ENCODE measurements at regions of chr15 and their contacts with region 1.

Region 1: DNA sequence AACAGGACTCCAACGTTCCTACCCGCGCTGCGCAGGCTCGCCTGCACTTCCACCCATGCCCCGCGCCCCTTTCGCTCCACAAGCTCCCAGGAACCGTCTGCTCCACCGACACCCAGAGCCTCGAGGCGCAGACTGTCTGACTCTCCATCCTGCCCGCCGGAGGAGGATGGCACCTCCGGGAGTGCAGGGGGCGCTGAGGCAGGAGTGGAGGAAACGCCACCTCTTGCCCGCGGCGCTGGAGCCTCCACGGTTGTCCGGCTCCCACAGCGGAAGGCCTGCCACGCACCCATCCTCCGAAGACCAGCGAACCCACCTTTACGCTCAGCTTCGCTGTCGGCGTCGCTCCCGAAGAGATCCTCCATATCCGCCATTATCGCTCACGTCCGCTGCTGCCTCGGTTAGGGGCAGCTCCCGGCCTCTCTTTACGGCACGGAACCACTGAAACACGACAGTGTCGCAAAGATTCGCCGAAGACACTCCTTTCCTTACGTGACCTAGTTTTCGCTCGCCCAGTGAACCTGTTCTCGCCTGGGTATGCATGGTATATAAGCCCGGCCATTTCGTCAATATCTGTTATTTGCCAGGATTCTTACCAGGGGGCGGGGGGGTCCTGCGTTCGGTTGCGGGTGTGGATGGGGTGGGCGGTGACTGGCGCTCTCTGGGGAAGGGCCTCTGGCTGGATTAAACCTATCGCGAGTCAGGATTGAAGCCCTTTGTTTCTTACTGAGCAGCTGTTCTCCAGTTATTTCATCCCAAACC is at the start of gene LEO1:
- DNase-seq: peak; percentile 92 to 95 (median 93)
- H3K4me3 ChIP-seq: peak within 1 kb of the TSS; percentile 93 to 96
- H3K4me3 Mint-ChIP-seq: peak within 1 kb of the TSS; percentile 95 to 100 (median 98)
- H3K27ac ChIP-seq: peak within 1 kb of the TSS; percentile 77
- H3K27ac Mint-ChIP-seq: peak within 1 kb of the TSS; percentile 94 to 99 (median 97)
- H3K4me1 ChIP-seq: peaks cover 18% of the 10 kb centered on the region
- H3K4me1 Mint-ChIP-seq: peaks cover 15 to 23% (median 19%) of the 10 kb centered on the region in 4 donors
- H3K27me3 ChIP-seq: no peaks in the 10 kb centered on the region
- H3K27me3 Mint-ChIP-seq: peaks cover 0 to 1% of the 10 kb centered on the region in 2 donors
- total RNA-seq, gene LEO1: 21.7 to 22.2 TPM

Region 2: GRCh38 chr15:52018693-52019387 is 47.3 kb after region 1 on chr15 and contains the start of gene MAPK6:
- CTCF ChIA-PET with region 1: interaction called, 7 read pairs
- POLR2A ChIA-PET with region 1: interaction called, 35 read pairs
- intact Hi-C with region 1: loop called (anchors 1 kb)
- DNase-seq: peak; percentile 91 to 94 (median 94)
- H3K4me3 ChIP-seq: peak within 1 kb of the TSS; percentile 59 to 78
- H3K4me3 Mint-ChIP-seq: peak within 1 kb of the TSS; percentile 94 to 99 (median 97)
- H3K27ac ChIP-seq: peak within 1 kb of the TSS; percentile 89
- H3K27ac Mint-ChIP-seq: peak within 1 kb of the TSS; percentile 98 to 99 (median 98)
- H3K4me1 ChIP-seq: peaks cover 41% of the 10 kb centered on the region
- H3K4me1 Mint-ChIP-seq: peaks cover 25 to 54% (median 38%) of the 10 kb centered on the region in 4 donors
- H3K27me3 ChIP-seq: no peaks in the 10 kb centered on the region
- H3K27me3 Mint-ChIP-seq: no peaks in the 10 kb centered on the region
- total RNA-seq, gene MAPK6: 18.2 to 24.0 TPM

Region 3: DNA sequence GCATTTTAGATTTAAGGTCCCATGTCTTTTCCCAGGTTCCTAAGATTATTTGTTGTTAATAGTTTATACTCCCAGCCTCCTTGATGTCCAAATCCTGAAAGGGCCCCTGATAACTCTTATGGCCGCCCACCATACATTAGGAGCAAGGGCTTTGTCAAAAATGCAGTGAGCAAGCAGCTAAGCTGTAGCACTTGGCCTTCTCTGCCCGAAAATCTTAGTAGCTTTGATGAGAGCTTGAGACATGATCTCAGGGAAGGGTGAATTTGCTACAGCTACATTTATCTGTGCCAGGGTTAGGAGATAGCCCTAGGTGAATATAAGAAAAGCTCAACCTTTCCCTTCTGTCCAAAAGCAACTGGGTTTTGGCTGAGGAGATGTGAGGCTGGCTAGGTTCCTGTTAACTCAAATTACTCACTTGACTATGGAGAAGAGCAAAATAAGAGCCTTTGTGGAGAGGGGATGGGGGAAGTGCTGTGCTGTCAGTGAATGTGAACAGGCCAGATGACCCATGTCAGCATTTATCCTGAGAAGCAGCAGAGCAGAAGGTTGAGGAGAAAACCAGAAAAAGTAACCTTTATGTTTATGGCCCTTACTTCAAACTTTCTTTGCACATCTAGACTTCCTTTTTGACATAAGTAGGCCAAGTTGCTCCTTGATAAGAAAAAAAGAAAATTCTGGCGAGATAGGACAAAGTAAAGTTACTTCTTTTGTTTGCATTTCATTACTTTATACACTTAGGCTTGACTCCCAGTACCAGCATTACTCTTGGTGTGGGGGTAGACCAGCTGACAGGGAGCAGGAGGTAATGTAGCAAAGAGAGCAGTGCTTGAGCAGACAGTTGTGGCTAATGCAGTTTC is 68.6 kb after region 1 on chr15:
- CTCF ChIA-PET with region 1: no interaction called
- POLR2A ChIA-PET with region 1: interaction called, 6 read pairs
- intact Hi-C with region 1: loop called (anchors 1 kb)
- DNase-seq: no peak
- H3K4me3 ChIP-seq: no peak overlapping the region
- H3K4me3 Mint-ChIP-seq: peak overlapping the region in 3 of 8 donors; percentile 5 to 33 (median 9)
- H3K27ac ChIP-seq: no peak overlapping the region
- H3K27ac Mint-ChIP-seq: peak overlapping the region; percentile 13 to 86 (median 77)
- H3K4me1 ChIP-seq: peaks cover 48% of the 10 kb centered on the region
- H3K4me1 Mint-ChIP-seq: peaks cover 44 to 67% (median 55%) of the 10 kb centered on the region in 4 donors
- H3K27me3 ChIP-seq: no peaks in the 10 kb centered on the region
- H3K27me3 Mint-ChIP-seq: no peaks in the 10 kb centered on the region

Region 4: DNA sequence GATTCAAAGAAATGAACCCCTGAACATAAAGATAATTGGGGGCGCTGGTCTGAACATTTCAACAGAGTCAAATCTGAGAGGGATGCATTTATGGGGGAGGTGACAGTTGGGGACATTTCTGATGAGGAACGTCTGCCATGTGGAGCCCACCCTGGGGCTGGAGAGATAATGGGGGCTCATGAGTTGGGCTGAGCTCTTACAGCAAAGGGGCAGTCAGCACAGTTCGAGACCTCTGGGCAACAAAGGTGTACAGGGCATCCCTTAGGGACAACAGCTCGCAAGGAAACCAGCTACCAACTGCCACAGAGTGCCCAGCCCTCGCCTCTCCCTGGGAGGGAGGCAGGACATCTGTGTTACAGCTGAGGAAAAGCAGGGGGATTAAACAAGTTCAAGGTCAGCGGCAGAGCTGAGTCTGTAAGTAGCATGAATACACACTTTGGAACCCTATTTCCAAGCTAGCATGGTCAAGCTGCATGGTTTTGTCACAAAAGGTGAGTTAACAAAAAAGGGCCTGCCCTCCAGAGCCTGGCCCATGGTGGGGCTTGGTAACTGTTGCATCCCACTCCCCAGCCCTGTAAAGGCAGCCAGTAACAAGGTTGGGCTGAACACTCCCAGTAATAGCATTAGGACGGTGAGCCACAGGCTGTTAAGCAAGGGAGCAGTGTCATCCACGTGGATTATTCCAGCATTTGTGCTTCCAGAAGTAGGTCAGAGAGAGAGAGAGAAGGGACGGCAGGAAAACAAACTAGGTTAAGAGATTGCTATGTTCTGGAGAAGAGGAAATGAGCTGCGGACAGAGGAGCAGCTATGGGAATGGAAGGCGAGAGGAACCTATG is 215.3 kb after region 1 on chr15:
- CTCF ChIA-PET with region 1: no interaction called
- POLR2A ChIA-PET with region 1: no interaction called
- intact Hi-C with region 1: no loop called
- DNase-seq: no peak
- H3K4me3 ChIP-seq: no peak overlapping the region
- H3K4me3 Mint-ChIP-seq: no peak overlapping the region
- H3K27ac ChIP-seq: no peak overlapping the region
- H3K27ac Mint-ChIP-seq: peak overlapping the region in 2 of 7 donors; percentile 1 to 5
- H3K4me1 ChIP-seq: no peaks in the 10 kb centered on the region
- H3K4me1 Mint-ChIP-seq: peaks cover 0 to 5% (median 3%) of the 10 kb centered on the region in 4 donors
- H3K27me3 ChIP-seq: no peaks in the 10 kb centered on the region
- H3K27me3 Mint-ChIP-seq: peaks cover 0 to 2% of the 10 kb centered on the region in 2 donors

Measured in CD4-positive, alpha-beta memory T cell (primary cell).